ENCODE measurements at regions of chr4 and their contacts with region 1.

Region 1: DNA sequence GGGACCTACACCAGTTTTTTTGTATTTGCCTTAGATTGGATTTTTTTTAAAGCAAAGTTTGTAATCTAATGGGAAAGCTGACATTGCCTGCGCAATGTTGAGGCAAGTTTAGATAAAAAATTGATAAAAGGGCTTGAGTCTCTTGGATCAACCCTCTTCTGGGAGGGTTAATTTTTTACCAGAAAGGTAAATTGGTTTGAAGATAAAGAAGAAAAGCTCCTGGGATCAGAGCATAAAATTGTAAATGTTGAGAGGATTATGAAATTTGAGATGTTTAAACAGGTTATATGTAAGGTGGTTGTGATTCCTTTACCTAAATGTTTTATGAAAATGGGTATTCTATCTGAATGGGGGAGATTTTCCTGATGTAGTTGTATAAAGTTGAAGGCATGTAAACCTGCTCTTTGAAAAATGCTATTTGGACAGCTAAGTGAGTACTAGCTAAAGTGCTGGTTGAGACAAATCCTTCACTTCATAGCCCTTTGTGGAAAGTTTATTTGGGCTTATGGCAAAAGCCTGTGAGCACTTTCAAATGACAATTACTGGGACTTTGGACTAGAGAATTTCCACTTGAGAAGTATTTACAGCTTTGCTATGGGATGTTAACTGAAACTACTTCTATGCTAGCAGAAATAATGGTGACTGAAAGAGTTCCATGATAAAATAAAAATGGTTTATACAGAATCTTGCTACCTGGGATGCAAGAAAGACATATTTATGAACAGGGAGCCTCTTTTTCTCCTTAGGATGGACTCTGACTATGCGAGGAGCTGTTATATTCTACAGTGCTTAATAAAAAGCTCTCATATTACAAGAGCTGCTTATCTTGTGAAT is 56.2 kb downstream of the UGT2B10 start:
- DNase-seq: peak in 1 of 2 experiments; percentile 67
- H3K4me3 ChIP-seq: no peak overlapping the region
- H3K4me3 Mint-ChIP-seq: peak overlapping the region; percentile 44
- H3K27ac Mint-ChIP-seq: peak overlapping the region; percentile 69
- H3K4me1 ChIP-seq: peaks cover 34% of the 10 kb centered on the region
- H3K4me1 Mint-ChIP-seq: no peaks in the 10 kb centered on the region
- H3K27me3 ChIP-seq: no peaks in the 10 kb centered on the region
- H3K27me3 Mint-ChIP-seq: no peaks in the 10 kb centered on the region
- CTCF ChIP-seq: no peak

Region 2: DNA sequence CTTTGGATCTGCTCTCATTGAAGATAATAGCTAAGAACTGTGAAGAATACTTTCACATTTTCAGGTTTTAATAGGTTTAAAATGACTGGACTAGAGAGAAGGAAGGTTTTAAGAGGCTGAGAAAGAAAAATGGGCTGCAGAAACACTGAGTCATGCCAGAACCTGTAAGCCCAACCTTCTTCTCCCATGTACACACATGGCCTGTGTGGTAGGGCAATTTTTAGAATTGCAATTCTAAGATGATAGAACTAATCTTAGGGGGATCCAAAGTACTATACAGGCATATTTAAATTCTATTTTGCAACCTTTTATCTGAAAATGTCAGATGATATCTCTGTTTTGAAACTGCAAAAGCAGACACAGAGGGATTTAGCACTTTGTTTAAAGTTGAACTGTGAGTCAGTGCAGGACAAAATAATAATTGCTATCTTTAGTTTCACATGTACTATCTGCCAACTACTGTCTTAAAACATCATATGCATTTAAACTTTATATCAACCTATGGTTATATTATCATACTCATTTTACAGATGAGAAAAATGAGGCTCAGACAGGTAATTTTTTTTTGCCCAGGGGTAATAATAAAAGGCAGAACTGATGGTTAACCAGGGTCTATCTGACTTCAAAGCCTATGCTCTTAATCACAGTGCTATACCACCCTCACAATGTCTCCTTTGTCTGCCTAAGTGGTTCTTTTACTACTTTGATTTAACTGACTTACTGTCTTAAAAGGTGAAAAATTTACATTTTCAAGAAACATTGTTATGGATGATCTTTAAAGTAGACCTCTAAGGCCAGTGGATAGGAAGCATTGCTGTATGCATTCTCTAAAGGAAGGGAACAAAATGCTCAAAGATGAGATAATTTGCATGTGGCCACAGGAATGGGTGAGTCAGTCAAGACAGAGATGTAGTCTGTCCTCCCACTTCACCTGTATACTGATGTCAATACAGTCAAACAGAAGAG is 420.5 kb before region 1 on chr4:
- CTCF ChIA-PET with region 1: no interaction called
- POLR2A ChIA-PET with region 1: no interaction called
- intact Hi-C with region 1: no loop called
- DNase-seq: no peak
- H3K4me3 ChIP-seq: no peak overlapping the region
- H3K4me3 Mint-ChIP-seq: no peak overlapping the region
- H3K27ac Mint-ChIP-seq: no peak overlapping the region
- H3K4me1 ChIP-seq: peaks cover 5% of the 10 kb centered on the region; the same call in 1 of the 2 replicates
- H3K4me1 Mint-ChIP-seq: peaks cover 7% of the 10 kb centered on the region
- H3K27me3 ChIP-seq: no peaks in the 10 kb centered on the region
- H3K27me3 Mint-ChIP-seq: no peaks in the 10 kb centered on the region
- CTCF ChIP-seq: no peak

Region 3: DNA sequence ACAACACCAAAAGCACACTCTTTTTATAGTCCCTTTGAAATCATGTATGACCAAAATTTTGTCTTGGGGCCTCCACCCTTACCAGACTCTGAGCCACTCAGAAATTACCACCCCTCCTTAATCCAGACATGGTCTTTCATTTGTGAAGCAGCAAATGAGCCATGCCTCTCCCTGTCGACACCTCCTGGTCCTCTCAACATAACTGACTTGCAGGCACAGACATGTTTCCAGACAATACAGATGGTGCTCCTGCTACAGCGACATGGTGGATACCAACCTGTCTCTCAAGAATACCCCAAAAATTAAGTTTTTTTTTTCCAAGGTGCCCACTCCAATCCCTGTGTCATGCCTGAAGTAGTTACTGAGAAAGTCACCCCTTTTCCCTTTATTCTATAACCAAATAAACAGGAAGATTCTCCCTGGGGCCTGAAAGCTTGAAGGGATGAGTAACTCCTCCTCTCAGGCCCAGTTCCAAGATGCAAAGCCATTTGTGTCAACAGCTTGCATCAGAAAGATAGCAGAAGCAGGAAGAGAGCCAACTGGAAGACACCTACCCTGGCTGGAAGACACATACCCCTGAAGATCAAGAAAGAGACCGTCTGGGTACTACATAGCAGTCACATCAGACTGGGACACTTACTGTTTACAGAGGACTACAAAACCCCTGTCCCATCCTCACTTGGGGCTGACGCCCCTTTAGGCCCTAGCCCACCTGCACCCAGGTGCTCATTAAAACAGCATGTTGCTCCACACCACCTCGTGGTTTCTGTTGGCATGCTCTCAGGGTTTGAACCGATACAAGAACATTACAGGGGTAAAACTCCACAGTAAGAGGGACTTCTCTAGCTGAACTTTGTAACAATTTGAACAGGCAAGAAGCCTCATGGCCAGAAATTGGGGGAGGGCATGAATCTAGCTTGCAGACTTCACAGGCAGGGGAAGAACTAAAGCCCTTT is 290.4 kb before region 1 on chr4:
- CTCF ChIA-PET with region 1: no interaction called
- POLR2A ChIA-PET with region 1: no interaction called
- intact Hi-C with region 1: loop called (anchors 10 kb)
- DNase-seq: no peak
- H3K4me3 ChIP-seq: no peak overlapping the region
- H3K4me3 Mint-ChIP-seq: no peak overlapping the region
- H3K27ac Mint-ChIP-seq: no peak overlapping the region
- H3K4me1 ChIP-seq: no peaks in the 10 kb centered on the region
- H3K4me1 Mint-ChIP-seq: no peaks in the 10 kb centered on the region
- H3K27me3 ChIP-seq: no peaks in the 10 kb centered on the region
- H3K27me3 Mint-ChIP-seq: no peaks in the 10 kb centered on the region
- CTCF ChIP-seq: no peak

Region 4: DNA sequence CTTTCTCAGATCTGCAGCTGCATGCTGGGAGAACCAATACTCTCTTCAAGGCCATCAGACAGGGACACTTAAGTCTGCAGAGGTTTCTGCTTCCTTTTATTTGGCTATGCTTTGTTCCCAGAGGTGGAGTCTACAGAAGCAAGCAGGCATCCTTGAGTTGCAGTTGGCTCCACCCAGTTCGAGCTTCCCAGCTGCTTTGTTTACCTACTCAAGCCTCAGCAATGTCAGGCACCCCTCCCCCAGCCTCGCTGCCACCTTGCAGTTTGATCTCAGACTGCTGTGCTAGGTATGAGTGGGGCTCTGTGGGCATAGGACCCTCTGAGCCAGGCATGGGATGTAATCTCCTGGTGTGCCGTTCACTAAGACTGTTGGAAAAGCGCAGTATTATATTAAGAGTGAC is 189.0 kb before region 1 on chr4:
- CTCF ChIA-PET with region 1: no interaction called
- POLR2A ChIA-PET with region 1: no interaction called
- intact Hi-C with region 1: no loop called
- DNase-seq: no peak
- H3K4me3 ChIP-seq: no peak overlapping the region
- H3K4me3 Mint-ChIP-seq: no peak overlapping the region
- H3K27ac Mint-ChIP-seq: no peak overlapping the region
- H3K4me1 ChIP-seq: no peaks in the 10 kb centered on the region
- H3K4me1 Mint-ChIP-seq: no peaks in the 10 kb centered on the region
- H3K27me3 ChIP-seq: no peaks in the 10 kb centered on the region
- H3K27me3 Mint-ChIP-seq: no peaks in the 10 kb centered on the region
- CTCF ChIP-seq: no peak

Region 5: GRCh38 chr4:68820770-68821169 is 51.3 kb before region 1 on chr4:
- CTCF ChIA-PET with region 1: no interaction called
- POLR2A ChIA-PET with region 1: no interaction called
- intact Hi-C with region 1: loop called (anchors 1 kb)
- DNase-seq: no peak
- H3K4me3 ChIP-seq: no peak overlapping the region
- H3K4me3 Mint-ChIP-seq: no peak overlapping the region
- H3K27ac Mint-ChIP-seq: no peak overlapping the region
- H3K4me1 ChIP-seq: no peaks in the 10 kb centered on the region
- H3K4me1 Mint-ChIP-seq: peaks cover 11% of the 10 kb centered on the region
- H3K27me3 ChIP-seq: no peaks in the 10 kb centered on the region
- H3K27me3 Mint-ChIP-seq: no peaks in the 10 kb centered on the region
- CTCF ChIP-seq: no peak

Region 6: GRCh38 chr4:68963374-68963773 is 91.3 kb after region 1 on chr4:
- CTCF ChIA-PET with region 1: interaction called, 3 read pairs
- POLR2A ChIA-PET with region 1: no interaction called
- intact Hi-C with region 1: loop called (anchors 1 kb)
- DNase-seq: peak; percentile 29 to 42
- H3K4me3 ChIP-seq: no peak overlapping the region
- H3K4me3 Mint-ChIP-seq: peak overlapping the region; percentile 38
- H3K27ac Mint-ChIP-seq: peak overlapping the region; percentile 34
- H3K4me1 ChIP-seq: peaks cover 49% of the 10 kb centered on the region
- H3K4me1 Mint-ChIP-seq: peaks cover 34% of the 10 kb centered on the region
- H3K27me3 ChIP-seq: no peaks in the 10 kb centered on the region
- H3K27me3 Mint-ChIP-seq: no peaks in the 10 kb centered on the region
- CTCF ChIP-seq: no peak

Region 7: GRCh38 chr4:69126024-69126423 is 254.0 kb after region 1 on chr4:
- CTCF ChIA-PET with region 1: no interaction called
- POLR2A ChIA-PET with region 1: no interaction called
- intact Hi-C with region 1: no loop called
- DNase-seq: no peak
- H3K4me3 ChIP-seq: no peak overlapping the region
- H3K4me3 Mint-ChIP-seq: no peak overlapping the region
- H3K27ac Mint-ChIP-seq: no peak overlapping the region
- H3K4me1 ChIP-seq: no peaks in the 10 kb centered on the region
- H3K4me1 Mint-ChIP-seq: peaks cover 9% of the 10 kb centered on the region
- H3K27me3 ChIP-seq: no peaks in the 10 kb centered on the region
- H3K27me3 Mint-ChIP-seq: no peaks in the 10 kb centered on the region
- CTCF ChIP-seq: no peak

Region 8: GRCh38 chr4:69167300-69167699 is 295.3 kb after region 1 on chr4:
- CTCF ChIA-PET with region 1: interaction called, 3 read pairs
- POLR2A ChIA-PET with region 1: no interaction called
- intact Hi-C with region 1: loop called (anchors 1 kb)
- DNase-seq: no peak
- H3K4me3 ChIP-seq: no peak overlapping the region
- H3K4me3 Mint-ChIP-seq: no peak overlapping the region
- H3K27ac Mint-ChIP-seq: no peak overlapping the region
- H3K4me1 ChIP-seq: 0 out of 2 replicates have a peak, but pooled peaks cover 4% of the 10 kb centered on the region
- H3K4me1 Mint-ChIP-seq: peaks cover 6% of the 10 kb centered on the region
- H3K27me3 ChIP-seq: no peaks in the 10 kb centered on the region
- H3K27me3 Mint-ChIP-seq: no peaks in the 10 kb centered on the region
- CTCF ChIP-seq: no peak